ENCODE measurements at regions of chr11 and their contacts with region 1.

Region 1: GRCh38 chr11:75867775-75868374 is 52.9 kb downstream of the UVRAG start:
- DNase-seq: peak; percentile 47
- H3K4me3 ChIP-seq: no peak overlapping the region
- H3K27ac ChIP-seq: no peak overlapping the region
- H3K4me1 ChIP-seq: no peaks in the 10 kb centered on the region
- H3K27me3 ChIP-seq: no peaks in the 10 kb centered on the region
- CTCF ChIP-seq: peak; percentile 86

Region 2: DNA sequence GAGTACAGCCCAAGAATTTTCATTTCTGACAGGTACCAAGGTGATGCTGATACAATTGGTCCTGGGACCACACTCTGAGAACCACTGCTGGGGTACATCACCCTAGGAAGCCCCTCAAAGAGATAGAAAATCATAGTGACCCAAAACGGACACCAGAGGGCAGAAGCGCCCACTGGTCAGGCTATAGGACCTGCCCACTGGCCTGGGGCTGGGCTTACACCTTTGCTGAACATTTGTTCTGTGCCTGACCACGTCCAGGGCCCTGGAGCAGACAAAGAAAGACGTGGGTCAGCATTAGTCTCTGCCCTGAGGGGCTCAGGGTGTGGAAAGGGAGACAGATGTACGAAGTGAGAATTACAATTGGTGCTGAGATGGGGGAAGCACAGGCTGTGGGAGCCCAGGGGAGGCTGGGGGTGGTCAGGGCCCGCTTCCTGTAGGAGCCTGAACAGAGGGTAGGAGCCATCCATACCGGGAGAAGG is 320.3 kb before region 1 on chr11:
- intact Hi-C with region 1: loop called (anchors 5 kb)
- DNase-seq: peak; percentile 57
- H3K4me3 ChIP-seq: no peak overlapping the region
- H3K27ac ChIP-seq: no peak overlapping the region
- H3K4me1 ChIP-seq: no peaks in the 10 kb centered on the region
- H3K27me3 ChIP-seq: no peaks in the 10 kb centered on the region
- CTCF ChIP-seq: peak; percentile 74

Region 3: DNA sequence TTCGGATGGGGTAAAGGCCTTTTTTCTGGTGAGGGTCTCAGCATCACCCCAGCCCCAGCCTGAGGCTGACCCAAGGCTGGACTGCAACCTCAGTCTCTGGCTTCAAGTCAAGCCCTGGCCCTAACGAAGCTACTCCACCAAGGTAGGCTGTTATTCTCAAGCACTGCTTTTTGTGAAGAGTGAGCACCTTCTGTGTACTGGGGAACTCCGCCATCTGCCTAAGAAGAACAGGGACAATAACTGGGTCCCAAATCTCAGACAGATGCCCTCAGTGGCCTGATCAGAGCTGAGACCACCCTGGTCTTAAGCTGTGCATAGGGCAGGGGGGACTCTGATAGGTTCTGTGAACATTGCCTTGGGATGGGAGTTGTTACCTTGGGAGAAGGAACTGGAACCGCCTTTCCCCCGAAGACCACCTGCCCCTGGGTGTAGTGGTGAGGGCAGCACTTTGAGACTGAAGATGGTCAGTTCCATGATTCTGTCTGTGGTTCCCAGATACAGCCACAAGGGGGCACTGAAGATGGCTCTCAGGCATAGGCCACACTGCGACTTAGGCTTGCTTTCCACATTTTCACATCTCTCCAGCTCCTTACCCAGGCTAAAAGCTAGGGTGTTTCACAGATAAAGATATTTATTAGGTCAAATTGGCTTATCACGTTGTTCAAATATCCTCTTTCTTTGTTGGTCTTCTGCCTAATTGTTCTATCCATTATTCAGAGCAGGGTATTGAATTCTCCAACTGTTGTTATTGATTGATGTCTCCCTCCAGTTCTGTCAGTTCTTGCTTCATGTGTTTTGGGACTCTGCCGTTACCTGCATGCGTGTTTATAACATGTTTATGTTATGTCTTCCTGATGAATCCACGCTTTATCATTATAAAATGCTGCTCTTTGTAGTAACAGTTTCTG is 64.7 kb before region 1 on chr11:
- intact Hi-C with region 1: loop called (anchors 2 kb)
- DNase-seq: peak; percentile 86
- H3K4me3 ChIP-seq: no peak overlapping the region
- H3K27ac ChIP-seq: no peak overlapping the region
- H3K4me1 ChIP-seq: no peaks in the 10 kb centered on the region
- H3K27me3 ChIP-seq: no peaks in the 10 kb centered on the region
- CTCF ChIP-seq: peak; percentile 82